Activated T-helper 2 cell treated with anti-CD3 and anti-CD28 coated beads, Interferon-gamma antibody, Interleukin-2, Interleukin-4, amounts not matched to agents 10 μg/mL and 5 μg/mL and 100 μg/mL, durations not matched to agents 14 hours and 24 hours and 36 hours (primary cell): ENCODE measurements at regions of chr4 and their contacts with region 1.

Region 1: DNA sequence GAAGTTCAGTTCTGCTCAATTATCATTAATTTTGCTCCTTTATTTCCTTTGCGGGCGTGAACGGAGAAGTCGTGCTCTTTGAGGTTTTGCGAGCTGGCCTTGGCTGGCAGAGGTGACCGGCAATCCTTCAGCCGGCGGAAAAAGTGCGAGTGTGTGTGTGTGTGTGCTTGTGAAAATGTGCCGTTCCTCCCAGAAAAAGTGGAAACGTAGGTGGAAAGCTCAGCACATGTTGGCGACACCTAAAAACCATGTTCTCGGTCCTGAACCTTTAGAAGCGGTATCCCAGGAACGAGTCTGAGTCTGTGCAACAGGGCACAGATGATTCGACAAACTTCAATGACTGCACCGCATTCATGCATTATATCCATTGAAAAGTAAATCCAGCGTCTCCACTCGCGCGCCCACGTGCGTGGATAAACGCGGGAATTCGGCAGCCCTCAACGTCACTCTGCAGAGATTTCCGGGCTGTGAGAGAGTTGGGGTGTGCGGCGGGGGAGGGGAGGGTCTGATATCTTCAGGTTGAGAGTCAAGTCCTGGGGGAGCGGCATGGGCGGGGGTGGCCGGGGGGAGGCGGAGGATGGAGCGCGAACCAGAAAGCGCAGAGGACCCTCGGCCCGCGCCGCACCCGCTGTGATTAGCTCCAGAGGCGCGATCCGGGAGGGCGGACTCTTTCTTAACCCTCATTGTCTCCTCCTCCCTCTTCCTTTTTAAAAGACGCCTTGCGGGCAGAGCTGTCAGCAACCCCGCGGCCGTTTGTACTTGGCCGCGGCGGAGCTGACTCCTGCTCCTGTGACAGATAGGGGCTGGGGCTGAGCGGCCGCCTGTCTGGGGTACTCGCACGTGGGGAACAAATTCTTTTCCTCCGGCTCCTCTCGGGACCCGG is at the start of gene SHISA3:
- DNase-seq: peak; percentile 20
- H3K4me3 Mint-ChIP-seq: peak within 1 kb of the TSS; percentile 79
- H3K27ac Mint-ChIP-seq: no peak within 1 kb of the TSS
- H3K4me1 Mint-ChIP-seq: peaks cover 15% of the 10 kb centered on the region
- H3K27me3 Mint-ChIP-seq: peaks cover 65% of the 10 kb centered on the region
- total RNA-seq, gene SHISA3: 0.80 and 1.2 TPM in 2 replicates

Region 2: DNA sequence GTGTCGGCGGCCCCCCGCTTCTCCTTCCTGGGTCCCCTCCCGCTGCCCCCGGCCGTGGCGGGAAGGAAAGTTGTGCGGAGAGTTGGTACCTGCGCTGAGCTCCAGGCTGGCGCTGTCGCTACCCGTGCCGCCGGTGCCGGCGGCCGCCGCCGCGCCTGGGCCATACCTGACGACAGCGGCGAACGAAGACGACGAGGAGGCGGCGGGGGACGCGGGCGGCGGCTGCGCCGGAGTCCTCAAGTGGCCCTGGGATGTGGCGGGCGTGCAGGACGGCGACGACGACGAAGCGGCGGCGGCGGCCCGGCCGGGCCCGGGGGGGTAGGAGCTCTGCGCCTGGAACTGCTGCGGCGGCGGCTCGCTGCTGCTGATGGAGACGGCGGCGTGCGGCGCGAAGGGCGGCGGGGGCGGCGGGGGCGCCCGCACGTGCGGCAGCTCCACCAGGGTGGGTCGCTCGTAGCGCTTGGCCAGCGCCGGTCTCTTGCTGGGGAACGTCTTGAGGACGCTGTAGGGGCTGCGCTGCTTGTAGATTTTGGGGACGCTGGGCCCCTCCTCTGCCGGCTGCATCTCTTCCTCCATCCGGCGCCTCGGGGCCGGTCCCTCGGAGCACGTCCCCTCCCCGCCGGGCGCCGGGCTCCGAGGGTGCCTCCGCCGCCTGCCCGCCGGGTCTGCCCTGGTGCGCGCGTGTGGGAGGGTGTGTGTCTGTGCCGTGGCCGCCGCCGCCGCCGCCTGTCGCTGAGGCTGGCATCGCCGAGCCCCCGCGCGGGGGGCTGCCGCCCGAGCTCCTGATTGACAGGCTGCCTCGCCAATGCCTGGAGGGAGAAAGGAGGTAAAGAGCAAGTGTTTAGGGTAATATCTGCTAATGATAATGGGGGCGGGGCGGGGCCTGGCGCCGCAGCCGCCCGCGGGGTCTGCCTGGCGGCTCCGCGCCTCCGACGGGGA is 245.2 kb before region 1 on chr4:
- intact Hi-C with region 1: loop called (anchors 5 kb)
- DNase-seq: no peak
- H3K4me3 Mint-ChIP-seq: peak overlapping the region; percentile 49
- H3K27ac Mint-ChIP-seq: no peak overlapping the region
- H3K4me1 Mint-ChIP-seq: peaks cover 6% of the 10 kb centered on the region
- H3K27me3 Mint-ChIP-seq: peaks cover 56% of the 10 kb centered on the region

Region 3: GRCh38 chr4:42234817-42235216 is 162.2 kb before region 1 on chr4:
- intact Hi-C with region 1: no loop called
- DNase-seq: no peak
- H3K4me3 Mint-ChIP-seq: no peak overlapping the region
- H3K27ac Mint-ChIP-seq: no peak overlapping the region
- H3K4me1 Mint-ChIP-seq: no peaks in the 10 kb centered on the region
- H3K27me3 Mint-ChIP-seq: no peaks in the 10 kb centered on the region

Region 4: GRCh38 chr4:42425146-42426065 is 28.4 kb after region 1 on chr4:
- intact Hi-C with region 1: no loop called
- DNase-seq: no peak
- H3K4me3 Mint-ChIP-seq: no peak overlapping the region
- H3K27ac Mint-ChIP-seq: no peak overlapping the region
- H3K4me1 Mint-ChIP-seq: no peaks in the 10 kb centered on the region
- H3K27me3 Mint-ChIP-seq: no peaks in the 10 kb centered on the region

Region 5: GRCh38 chr4:42460043-42460442 is 63.0 kb after region 1 on chr4:
- intact Hi-C with region 1: no loop called
- DNase-seq: no peak
- H3K4me3 Mint-ChIP-seq: no peak overlapping the region
- H3K27ac Mint-ChIP-seq: no peak overlapping the region
- H3K4me1 Mint-ChIP-seq: peaks cover 12% of the 10 kb centered on the region
- H3K27me3 Mint-ChIP-seq: no peaks in the 10 kb centered on the region

Region 6: DNA sequence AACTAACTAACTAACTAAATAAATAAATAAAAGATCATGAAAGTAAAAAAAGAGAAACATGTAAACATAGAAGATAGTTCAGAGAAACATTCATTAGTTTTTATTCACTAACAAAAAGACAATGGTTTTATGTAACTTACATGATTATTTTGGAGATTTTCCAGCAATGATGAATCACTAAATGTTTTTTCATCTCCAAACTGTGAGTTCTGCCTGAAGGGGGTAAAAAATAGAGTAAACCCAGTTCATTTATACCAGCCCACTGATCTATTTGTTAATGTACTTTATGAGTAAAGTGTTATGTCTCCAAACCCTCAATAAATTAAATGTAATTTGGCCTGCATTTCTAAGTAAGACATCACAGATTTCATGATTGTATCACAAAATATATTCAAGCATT is 158.8 kb after region 1 on chr4:
- intact Hi-C with region 1: no loop called
- DNase-seq: no peak
- H3K4me3 Mint-ChIP-seq: no peak overlapping the region
- H3K27ac Mint-ChIP-seq: no peak overlapping the region
- H3K4me1 Mint-ChIP-seq: no peaks in the 10 kb centered on the region
- H3K27me3 Mint-ChIP-seq: no peaks in the 10 kb centered on the region